ENCODE measurements at regions of chr10 and their contacts with region 1.

Region 1: DNA sequence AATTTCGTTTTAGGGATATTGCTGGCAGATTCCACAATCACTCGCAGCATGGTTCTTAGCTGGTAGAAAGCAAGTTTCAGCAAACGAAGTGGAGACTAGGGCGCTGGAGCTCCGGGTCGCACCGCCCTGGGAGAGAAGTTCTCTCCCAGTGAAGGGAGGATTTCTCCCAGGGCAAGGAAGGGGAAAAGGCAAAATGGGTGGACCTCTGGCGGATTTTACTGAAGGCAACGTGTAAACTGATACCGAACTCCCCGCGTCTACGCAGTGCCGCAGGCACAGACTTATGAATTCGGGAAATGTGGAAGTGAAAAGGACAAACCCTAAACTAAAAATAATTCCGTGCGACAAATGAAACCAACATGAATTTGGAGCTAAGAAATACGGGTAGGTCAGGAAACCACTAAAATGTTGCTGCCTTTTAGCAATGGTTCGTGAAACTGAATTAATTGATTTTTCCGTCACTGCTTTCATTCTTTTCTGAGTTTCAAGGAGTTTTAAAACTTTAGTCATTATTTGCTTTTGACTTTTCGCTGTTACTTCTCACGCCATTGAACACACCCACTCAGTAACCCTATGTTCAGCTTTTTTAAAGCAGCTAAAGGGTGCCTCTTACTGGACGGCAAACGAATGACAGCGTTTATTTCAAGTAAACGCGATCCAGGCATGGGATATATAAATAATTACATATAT is at the start of gene MYOF:
- DNase-seq: peak; percentile 70
- ATAC-seq: peak; percentile 92
- total RNA-seq, gene MYOF: 76.2 TPM

Region 2: GRCh38 chr10:93334901-93335327 is 147.4 kb before region 1 on chr10:
- intact Hi-C with region 1: no loop called
- DNase-seq: no peak
- ATAC-seq: no peak

Region 3: DNA sequence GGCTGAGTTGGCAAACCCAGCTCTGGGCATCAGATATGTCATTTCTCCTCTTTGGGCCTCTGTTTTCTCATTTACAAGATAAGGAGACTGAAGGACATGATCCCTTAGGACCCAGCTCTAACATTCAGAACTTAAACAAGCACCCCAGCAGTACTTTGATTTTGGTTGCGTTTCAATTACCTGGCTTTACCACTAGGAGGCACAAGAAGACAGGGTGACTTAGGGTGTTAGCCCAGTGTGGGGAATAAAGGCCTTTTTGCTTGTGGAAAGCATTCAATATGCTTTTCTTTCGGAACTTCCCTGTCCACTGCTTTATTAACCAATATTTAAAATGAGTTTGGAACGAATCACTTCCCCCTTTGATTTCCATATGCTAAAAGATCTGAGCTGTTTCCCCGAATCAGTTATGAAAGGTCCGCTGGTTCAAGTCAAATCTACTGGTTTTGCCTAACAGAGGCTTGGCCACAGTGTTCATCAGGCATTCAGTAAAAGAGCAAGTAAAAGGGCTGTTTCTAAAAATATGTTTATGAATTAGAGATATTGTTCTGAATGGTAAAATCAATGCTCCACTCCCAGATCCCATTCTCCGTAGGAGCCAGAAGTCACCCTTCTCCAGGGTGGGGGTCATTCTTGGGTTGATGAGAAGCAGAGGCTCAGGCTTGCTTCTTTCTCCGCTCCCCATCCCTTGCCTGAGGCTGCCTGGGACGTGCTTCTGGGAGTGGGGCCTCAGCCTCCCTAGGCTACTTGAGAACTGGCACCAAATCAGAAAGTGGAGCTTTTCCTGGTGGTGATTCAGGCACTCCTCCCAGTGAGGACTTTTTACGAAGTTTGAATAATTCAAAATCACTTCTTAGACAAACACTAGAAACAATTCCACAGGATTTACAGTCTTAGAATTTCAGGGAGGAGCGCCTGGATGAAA is 105.7 kb before region 1 on chr10:
- intact Hi-C with region 1: loop called (anchors 5 kb)
- DNase-seq: peak; percentile 73
- ATAC-seq: peak; percentile 93